B cell (primary cell): ENCODE measurements at regions of chr11 and their contacts with region 1.

Region 1: GRCh38 chr11:95705485-95706124 is 84.0 kb downstream of the FAM76B start:
- DNase-seq: peak; percentile 91
- ATAC-seq: peak; percentile 90
- H3K4me3 ChIP-seq: no peak overlapping the region
- H3K4me3 Mint-ChIP-seq: no peak overlapping the region
- H3K27ac ChIP-seq: peak overlapping the region; percentile 14 to 68
- H3K27ac Mint-ChIP-seq: no peak overlapping the region
- H3K4me1 ChIP-seq: peaks cover 28 to 30% of the 10 kb centered on the region in 2 donors
- H3K4me1 Mint-ChIP-seq: peaks cover 27% of the 10 kb centered on the region
- H3K27me3 ChIP-seq: no peaks in the 10 kb centered on the region
- H3K27me3 Mint-ChIP-seq: no peaks in the 10 kb centered on the region
- CTCF ChIP-seq: peak; percentile 91

Region 2: GRCh38 chr11:95067039-95067840 is 638.4 kb before region 1 on chr11:
- CTCF ChIA-PET with region 1: interaction called, 11 read pairs
- POLR2A ChIA-PET with region 1: no interaction called
- intact Hi-C with region 1: no loop called
- DNase-seq: peak; percentile 88
- ATAC-seq: peak; percentile 78
- H3K4me3 ChIP-seq: peak overlapping the region; percentile 70 to 95 (median 93)
- H3K4me3 Mint-ChIP-seq: peak overlapping the region; percentile 100
- H3K27ac ChIP-seq: peak overlapping the region; percentile 78 to 87
- H3K27ac Mint-ChIP-seq: peak overlapping the region; percentile 100
- H3K4me1 ChIP-seq: peaks cover 14 to 22% of the 10 kb centered on the region in 2 donors
- H3K4me1 Mint-ChIP-seq: peaks cover 26% of the 10 kb centered on the region
- H3K27me3 ChIP-seq: no peaks in the 10 kb centered on the region
- H3K27me3 Mint-ChIP-seq: no peaks in the 10 kb centered on the region
- CTCF ChIP-seq: peak; percentile 52

Region 3: DNA sequence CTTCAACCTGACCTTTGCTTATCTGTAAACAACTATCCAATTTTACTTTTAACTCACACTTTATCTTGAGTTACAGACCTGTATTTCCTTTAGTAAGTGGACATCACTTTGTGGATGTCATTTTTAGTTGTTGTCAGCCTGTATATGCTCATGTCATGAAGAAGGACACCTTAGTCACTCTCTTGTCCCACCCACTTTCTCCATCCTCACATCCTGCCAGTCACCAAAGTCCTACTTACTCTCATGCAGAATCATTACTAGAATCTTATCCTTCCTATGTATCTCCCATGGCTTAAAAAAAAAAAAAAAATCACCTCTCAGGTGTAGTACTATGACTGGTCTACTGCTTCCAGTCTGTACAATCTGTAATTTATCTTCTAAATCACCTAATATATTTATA is 517.9 kb before region 1 on chr11:
- CTCF ChIA-PET with region 1: interaction called, 31 read pairs
- POLR2A ChIA-PET with region 1: no interaction called
- intact Hi-C with region 1: no loop called
- DNase-seq: no peak
- ATAC-seq: no peak
- H3K4me3 ChIP-seq: no peak overlapping the region
- H3K4me3 Mint-ChIP-seq: no peak overlapping the region
- H3K27ac ChIP-seq: peak overlapping the region in 1 of 2 donors; percentile 59
- H3K27ac Mint-ChIP-seq: peak overlapping the region; percentile 29
- H3K4me1 ChIP-seq: no peaks in the 10 kb centered on the region
- H3K4me1 Mint-ChIP-seq: peaks cover 21% of the 10 kb centered on the region
- H3K27me3 ChIP-seq: no peaks in the 10 kb centered on the region
- H3K27me3 Mint-ChIP-seq: no peaks in the 10 kb centered on the region
- CTCF ChIP-seq: no peak

Region 4: GRCh38 chr11:95212609-95213008 is 493.0 kb before region 1 on chr11:
- CTCF ChIA-PET with region 1: interaction called, 21 read pairs
- POLR2A ChIA-PET with region 1: no interaction called
- intact Hi-C with region 1: no loop called
- DNase-seq: no peak
- ATAC-seq: no peak
- H3K4me3 ChIP-seq: no peak overlapping the region
- H3K4me3 Mint-ChIP-seq: no peak overlapping the region
- H3K27ac ChIP-seq: no peak overlapping the region
- H3K27ac Mint-ChIP-seq: no peak overlapping the region
- H3K4me1 ChIP-seq: peaks cover 13 to 23% of the 10 kb centered on the region in 2 donors
- H3K4me1 Mint-ChIP-seq: peaks cover 45% of the 10 kb centered on the region
- H3K27me3 ChIP-seq: no peaks in the 10 kb centered on the region
- H3K27me3 Mint-ChIP-seq: no peaks in the 10 kb centered on the region
- CTCF ChIP-seq: no peak

Region 5: DNA sequence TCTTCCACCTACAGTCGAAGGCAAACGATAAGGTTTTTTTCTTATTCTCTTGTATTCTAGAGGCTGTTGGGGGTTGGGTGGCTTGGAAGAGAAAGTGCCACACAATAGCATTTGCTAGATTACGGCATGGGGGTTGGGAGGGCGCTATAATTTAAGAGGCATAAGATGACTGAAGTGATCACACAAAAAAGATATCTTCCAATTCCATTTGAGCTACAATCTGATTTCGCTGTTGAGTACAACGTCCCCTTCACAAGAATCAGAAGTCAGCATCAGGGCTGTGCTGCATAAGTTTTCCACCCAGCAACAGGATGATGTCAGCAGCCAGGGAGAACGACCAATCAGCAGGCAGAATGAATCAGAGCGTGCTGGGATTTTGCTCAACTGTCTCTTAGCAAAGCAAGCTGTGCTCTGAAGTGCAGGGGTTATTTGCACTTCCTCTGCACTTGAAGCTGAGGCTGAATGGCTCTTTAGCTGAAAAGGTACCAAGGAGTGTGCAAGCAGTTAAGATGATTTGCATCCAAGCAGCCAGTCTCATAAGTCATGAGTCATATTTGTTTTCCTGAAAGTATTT is 451.4 kb before region 1 on chr11:
- CTCF ChIA-PET with region 1: interaction called, 30 read pairs
- POLR2A ChIA-PET with region 1: no interaction called
- intact Hi-C with region 1: no loop called
- DNase-seq: peak; percentile 93
- ATAC-seq: peak; percentile 95
- H3K4me3 ChIP-seq: peak overlapping the region; percentile 8 to 59 (median 34)
- H3K4me3 Mint-ChIP-seq: peak overlapping the region; percentile 86
- H3K27ac ChIP-seq: peak overlapping the region; percentile 90 to 93
- H3K27ac Mint-ChIP-seq: peak overlapping the region; percentile 97
- H3K4me1 ChIP-seq: peaks cover 60 to 76% of the 10 kb centered on the region in 2 donors
- H3K4me1 Mint-ChIP-seq: peaks cover 80% of the 10 kb centered on the region
- H3K27me3 ChIP-seq: no peaks in the 10 kb centered on the region
- H3K27me3 Mint-ChIP-seq: no peaks in the 10 kb centered on the region
- CTCF ChIP-seq: no peak

Region 6: GRCh38 chr11:95337175-95337957 is 368.2 kb before region 1 on chr11:
- CTCF ChIA-PET with region 1: interaction called, 8 read pairs
- POLR2A ChIA-PET with region 1: no interaction called
- intact Hi-C with region 1: loop called (anchors 5 kb)
- DNase-seq: peak; percentile 80
- ATAC-seq: peak; percentile 58
- H3K4me3 ChIP-seq: peak overlapping the region in 4 of 5 experiments; percentile 5 to 51 (median 38)
- H3K4me3 Mint-ChIP-seq: no peak overlapping the region
- H3K27ac ChIP-seq: peak overlapping the region; percentile 67 to 83
- H3K27ac Mint-ChIP-seq: no peak overlapping the region
- H3K4me1 ChIP-seq: peaks cover 21 to 32% of the 10 kb centered on the region in 2 donors
- H3K4me1 Mint-ChIP-seq: peaks cover 5% of the 10 kb centered on the region
- H3K27me3 ChIP-seq: no peaks in the 10 kb centered on the region
- H3K27me3 Mint-ChIP-seq: no peaks in the 10 kb centered on the region
- CTCF ChIP-seq: no peak

Region 7: DNA sequence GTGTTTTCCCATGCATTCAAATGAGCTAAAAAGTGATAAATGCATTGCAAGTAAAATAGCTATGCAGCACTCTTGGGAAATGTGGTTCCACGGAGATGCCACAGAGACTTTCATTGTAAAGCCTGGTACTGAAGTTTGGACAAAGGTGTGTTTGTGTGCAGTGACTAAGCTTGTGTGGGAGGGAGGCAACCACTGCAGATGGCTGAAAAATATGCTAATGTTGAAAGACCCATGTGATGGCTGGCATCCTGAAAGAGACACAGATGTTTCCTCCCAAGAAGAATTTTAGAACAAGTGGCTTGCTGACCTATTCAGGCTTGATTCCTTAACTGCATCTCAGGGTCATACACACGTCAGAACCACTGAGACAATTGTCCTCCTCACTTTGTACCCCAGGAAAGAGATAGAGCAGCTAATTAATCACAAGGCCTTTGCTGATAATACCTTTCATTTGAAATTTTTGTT is 10.2 kb after region 1 on chr11:
- CTCF ChIA-PET with region 1: interaction called, 93 read pairs
- POLR2A ChIA-PET with region 1: interaction called, 4 read pairs
- intact Hi-C with region 1: loop called (anchors 1 kb)
- DNase-seq: peak; percentile 94
- ATAC-seq: peak; percentile 80
- H3K4me3 ChIP-seq: peak overlapping the region in 4 of 5 experiments; percentile 16 to 55 (median 28)
- H3K4me3 Mint-ChIP-seq: peak overlapping the region; percentile 68
- H3K27ac ChIP-seq: peak overlapping the region; percentile 94 to 98
- H3K27ac Mint-ChIP-seq: peak overlapping the region; percentile 92
- H3K4me1 ChIP-seq: peaks cover 80 to 84% of the 10 kb centered on the region in 2 donors
- H3K4me1 Mint-ChIP-seq: peaks cover 85% of the 10 kb centered on the region
- H3K27me3 ChIP-seq: no peaks in the 10 kb centered on the region
- H3K27me3 Mint-ChIP-seq: no peaks in the 10 kb centered on the region
- CTCF ChIP-seq: no peak

Region 8: GRCh38 chr11:95849087-95849825 is 143.7 kb after region 1 on chr11:
- CTCF ChIA-PET with region 1: no interaction called
- POLR2A ChIA-PET with region 1: no interaction called
- intact Hi-C with region 1: no loop called
- DNase-seq: peak; percentile 29
- ATAC-seq: no peak
- H3K4me3 ChIP-seq: no peak overlapping the region
- H3K4me3 Mint-ChIP-seq: no peak overlapping the region
- H3K27ac ChIP-seq: no peak overlapping the region
- H3K27ac Mint-ChIP-seq: peak overlapping the region; percentile 21
- H3K4me1 ChIP-seq: no peaks in the 10 kb centered on the region
- H3K4me1 Mint-ChIP-seq: no peaks in the 10 kb centered on the region
- H3K27me3 ChIP-seq: no peaks in the 10 kb centered on the region
- H3K27me3 Mint-ChIP-seq: no peaks in the 10 kb centered on the region
- CTCF ChIP-seq: no peak

Region 9: GRCh38 chr11:96075532-96075959 is 369.9 kb after region 1 on chr11:
- CTCF ChIA-PET with region 1: no interaction called
- POLR2A ChIA-PET with region 1: no interaction called
- intact Hi-C with region 1: no loop called
- DNase-seq: peak; percentile 53
- ATAC-seq: peak; percentile 62
- H3K4me3 ChIP-seq: no peak overlapping the region
- H3K4me3 Mint-ChIP-seq: peak overlapping the region; percentile 32
- H3K27ac ChIP-seq: peak overlapping the region in 1 of 2 donors; percentile 53
- H3K27ac Mint-ChIP-seq: peak overlapping the region; percentile 43
- H3K4me1 ChIP-seq: peaks cover 29 to 30% of the 10 kb centered on the region in 2 donors
- H3K4me1 Mint-ChIP-seq: peaks cover 42% of the 10 kb centered on the region
- H3K27me3 ChIP-seq: no peaks in the 10 kb centered on the region
- H3K27me3 Mint-ChIP-seq: no peaks in the 10 kb centered on the region
- CTCF ChIP-seq: no peak